ENCODE measurements at regions of chr6 and their contacts with region 1.

Region 1: GRCh38 chr6:139187489-139187888 is 52.6 kb downstream of the HECA start:
- DNase-seq: no peak
- ATAC-seq: no peak
- H3K4me3 ChIP-seq: no peak overlapping the region
- H3K4me3 Mint-ChIP-seq: no peak overlapping the region
- H3K27ac ChIP-seq: no peak overlapping the region
- H3K27ac Mint-ChIP-seq: no peak overlapping the region
- H3K4me1 ChIP-seq: no peaks in the 10 kb centered on the region
- H3K4me1 Mint-ChIP-seq: peaks cover 10% of the 10 kb centered on the region
- H3K27me3 ChIP-seq: no peaks in the 10 kb centered on the region
- H3K27me3 Mint-ChIP-seq: no peaks in the 10 kb centered on the region
- CTCF ChIP-seq: no peak

Region 2: DNA sequence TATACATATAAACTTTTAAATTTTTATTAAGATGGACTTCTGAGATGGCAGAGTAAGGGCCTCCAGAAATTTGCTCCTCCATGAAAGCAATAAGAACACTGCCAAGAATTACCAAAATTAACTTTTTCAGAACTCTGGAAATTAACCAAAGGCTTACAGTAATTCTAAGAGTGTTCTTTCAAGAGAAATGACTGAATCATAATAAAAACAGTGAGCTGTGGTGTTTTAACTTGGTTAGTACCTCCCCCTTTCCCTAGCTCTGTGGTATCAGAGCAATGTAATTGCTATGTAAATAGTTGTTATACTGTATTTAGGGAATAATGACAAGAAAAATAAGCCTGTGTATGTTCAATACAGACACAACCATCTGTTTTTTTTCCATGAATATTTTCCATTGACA is 33.6 kb before region 1 on chr6:
- CTCF ChIA-PET with region 1: no interaction called
- POLR2A ChIA-PET with region 1: no interaction called
- intact Hi-C with region 1: loop called (anchors 5 kb)
- DNase-seq: no peak
- ATAC-seq: no peak
- H3K4me3 ChIP-seq: no peak overlapping the region
- H3K4me3 Mint-ChIP-seq: no peak overlapping the region
- H3K27ac ChIP-seq: no peak overlapping the region
- H3K27ac Mint-ChIP-seq: no peak overlapping the region
- H3K4me1 ChIP-seq: peaks cover 30 to 37% of the 10 kb centered on the region in 2 donors
- H3K4me1 Mint-ChIP-seq: peaks cover 68% of the 10 kb centered on the region
- H3K27me3 ChIP-seq: no peaks in the 10 kb centered on the region
- H3K27me3 Mint-ChIP-seq: no peaks in the 10 kb centered on the region
- CTCF ChIP-seq: no peak